HepG2 (cell line): ENCODE measurements at regions of chr2 and their contacts with region 1.

Region 1: GRCh38 chr2:11129598-11130449 is 25.4 kb upstream of the SLC66A3 start:
- DNase-seq: peak; percentile 62
- ATAC-seq: peak; percentile 68
- H3K4me3 ChIP-seq: peak overlapping the region; percentile 46 to 64 (median 47)
- H3K27ac ChIP-seq: no peak overlapping the region
- H3K4me1 ChIP-seq: peaks cover 58% of the 10 kb centered on the region
- H3K27me3 ChIP-seq: peaks cover 3 to 32% of the 10 kb centered on the region in 2 experiments; a peak in 4 of 5 replicates
- CTCF ChIP-seq: peak; percentile 93
- EP300 ChIP-seq: no peak
- POLR2A ChIP-seq: no peak
- RAD21 ChIP-seq: peak; percentile 76

Region 2: DNA sequence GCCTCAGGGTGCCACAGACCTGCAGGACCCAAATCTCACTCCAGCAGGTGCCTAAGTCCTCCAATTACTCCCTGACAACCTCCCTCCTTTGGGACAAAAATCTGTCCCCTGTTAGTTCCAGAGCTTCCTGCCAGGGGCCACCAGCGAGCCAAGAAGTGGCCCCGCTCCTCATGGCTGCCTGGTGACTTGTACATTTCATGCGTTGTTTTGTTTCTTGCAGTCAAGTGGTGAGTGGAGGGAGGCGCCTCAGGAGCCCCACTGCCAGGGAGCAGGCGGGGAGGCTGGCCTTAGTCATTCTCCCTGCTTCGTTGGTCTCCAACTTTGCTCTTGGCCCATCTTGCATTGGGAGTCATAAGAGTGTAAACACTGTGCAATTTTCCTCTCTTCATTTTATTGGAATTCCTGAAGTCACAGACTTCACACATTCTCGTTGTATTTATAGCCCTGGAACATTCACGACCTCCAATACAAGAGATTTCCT is 136.8 kb before region 1 on chr2:
- CTCF ChIA-PET with region 1: no interaction called
- POLR2A ChIA-PET with region 1: no interaction called
- in situ Hi-C with region 1: no loop called
- intact Hi-C with region 1: no loop called
- DNase-seq: no peak
- ATAC-seq: no peak
- H3K4me3 ChIP-seq: no peak overlapping the region
- H3K27ac ChIP-seq: no peak overlapping the region
- H3K4me1 ChIP-seq: no peaks in the 10 kb centered on the region
- H3K27me3 ChIP-seq: peaks cover 11 to 52% of the 10 kb centered on the region in 2 experiments; a peak in 4 of 5 replicates
- CTCF ChIP-seq: no peak
- EP300 ChIP-seq: no peak
- POLR2A ChIP-seq: no peak
- RAD21 ChIP-seq: no peak

Region 3: GRCh38 chr2:11154923-11155380 is 25.1 kb after region 1 on chr2:
- CTCF ChIA-PET with region 1: interaction called, 3 read pairs
- POLR2A ChIA-PET with region 1: interaction called, 18 read pairs
- in situ Hi-C with region 1: no loop called
- intact Hi-C with region 1: loop called (anchors 2 kb)
- DNase-seq: peak; percentile 92
- ATAC-seq: peak; percentile 64
- H3K4me3 ChIP-seq: peak overlapping the region; percentile 54 to 86 (median 56)
- H3K27ac ChIP-seq: no peak overlapping the region
- H3K4me1 ChIP-seq: peaks cover 50% of the 10 kb centered on the region
- H3K27me3 ChIP-seq: peaks cover 6 to 58% of the 10 kb centered on the region in 2 experiments; a peak in 4 of 5 replicates
- CTCF ChIP-seq: no peak
- EP300 ChIP-seq: 0 out of 4 replicates have a peak, but pooled peaks of 1 of the 2 experiments have one; percentile 8
- POLR2A ChIP-seq: peak in 1 of 2 experiments; percentile 44; a peak in 2 of 4 replicates
- RAD21 ChIP-seq: no peak

Region 4: DNA sequence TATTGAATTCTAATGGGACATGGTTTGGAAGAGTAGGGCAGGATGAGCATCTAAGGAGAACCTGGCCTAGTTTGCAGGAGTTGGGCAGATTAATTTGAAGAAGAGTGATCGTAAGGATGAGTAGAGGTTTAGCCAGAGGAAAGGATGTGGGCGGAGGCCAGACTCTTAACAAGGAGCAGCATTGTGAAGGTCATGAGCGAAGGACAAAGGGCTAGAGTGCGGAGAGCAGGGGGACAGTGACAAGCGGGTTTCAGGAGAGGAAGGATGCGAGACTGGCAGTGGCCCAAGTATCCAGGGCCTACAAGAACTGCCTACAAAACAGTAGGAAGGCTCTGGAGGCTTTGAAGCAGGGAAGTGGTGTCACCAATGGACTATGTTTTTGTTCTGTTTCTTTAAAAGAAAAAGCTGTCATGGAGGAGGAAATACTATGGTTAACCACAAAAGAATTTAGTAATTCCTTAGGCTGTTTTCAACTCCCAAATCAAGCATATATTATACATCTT is 45.5 kb after region 1 on chr2:
- CTCF ChIA-PET with region 1: no interaction called
- POLR2A ChIA-PET with region 1: no interaction called
- in situ Hi-C with region 1: no loop called
- intact Hi-C with region 1: loop called (anchors 5 kb)
- DNase-seq: no peak
- ATAC-seq: peak; percentile 15
- H3K4me3 ChIP-seq: no peak overlapping the region
- H3K27ac ChIP-seq: no peak overlapping the region
- H3K4me1 ChIP-seq: 0 out of 2 replicates have a peak, but pooled peaks cover 13% of the 10 kb centered on the region
- H3K27me3 ChIP-seq: no peaks in the 10 kb centered on the region
- CTCF ChIP-seq: no peak
- EP300 ChIP-seq: no peak
- POLR2A ChIP-seq: peak in 1 of 2 experiments; percentile 38; a peak in 1 of 4 replicates
- RAD21 ChIP-seq: no peak

Region 5: DNA sequence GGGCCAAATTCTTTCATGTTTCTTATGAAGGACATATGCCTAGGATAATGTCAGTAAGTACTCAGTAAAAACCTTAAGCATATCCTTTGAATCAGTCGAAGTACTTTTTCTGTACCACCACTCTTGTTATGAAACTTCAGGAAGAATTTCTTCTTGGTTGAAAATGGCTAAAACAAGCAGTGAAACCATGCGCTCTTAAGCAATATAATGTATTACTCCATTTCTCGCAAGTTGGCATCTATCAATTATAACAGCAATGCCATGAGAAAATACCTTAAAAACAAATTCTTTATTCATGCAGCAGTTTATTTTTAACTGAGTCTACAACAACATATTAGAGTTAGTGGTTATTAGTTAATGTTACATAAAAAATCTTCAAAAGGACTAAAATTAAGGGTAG is 66.4 kb after region 1 on chr2:
- CTCF ChIA-PET with region 1: no interaction called
- POLR2A ChIA-PET with region 1: no interaction called
- in situ Hi-C with region 1: no loop called
- intact Hi-C with region 1: loop called (anchors 5 kb)
- DNase-seq: no peak
- ATAC-seq: no peak
- H3K4me3 ChIP-seq: no peak overlapping the region
- H3K27ac ChIP-seq: no peak overlapping the region
- H3K4me1 ChIP-seq: no peaks in the 10 kb centered on the region
- H3K27me3 ChIP-seq: no peaks in the 10 kb centered on the region
- CTCF ChIP-seq: no peak
- EP300 ChIP-seq: no peak
- POLR2A ChIP-seq: no peak
- RAD21 ChIP-seq: no peak

Region 6: GRCh38 chr2:11411768-11412448 is 282.1 kb after region 1 on chr2:
- CTCF ChIA-PET with region 1: interaction called, 3 read pairs
- POLR2A ChIA-PET with region 1: interaction called, 6 read pairs
- in situ Hi-C with region 1: no loop called
- intact Hi-C with region 1: loop called (anchors 2 kb)
- DNase-seq: peak; percentile 65
- ATAC-seq: peak; percentile 78
- H3K4me3 ChIP-seq: no peak overlapping the region; a peak in 1 of 6 replicates
- H3K27ac ChIP-seq: no peak overlapping the region
- H3K4me1 ChIP-seq: peaks cover 33% of the 10 kb centered on the region
- H3K27me3 ChIP-seq: no peaks in the 10 kb centered on the region
- CTCF ChIP-seq: peak; percentile 92
- EP300 ChIP-seq: no peak
- POLR2A ChIP-seq: no peak
- RAD21 ChIP-seq: peak; percentile 93

Region 7: DNA sequence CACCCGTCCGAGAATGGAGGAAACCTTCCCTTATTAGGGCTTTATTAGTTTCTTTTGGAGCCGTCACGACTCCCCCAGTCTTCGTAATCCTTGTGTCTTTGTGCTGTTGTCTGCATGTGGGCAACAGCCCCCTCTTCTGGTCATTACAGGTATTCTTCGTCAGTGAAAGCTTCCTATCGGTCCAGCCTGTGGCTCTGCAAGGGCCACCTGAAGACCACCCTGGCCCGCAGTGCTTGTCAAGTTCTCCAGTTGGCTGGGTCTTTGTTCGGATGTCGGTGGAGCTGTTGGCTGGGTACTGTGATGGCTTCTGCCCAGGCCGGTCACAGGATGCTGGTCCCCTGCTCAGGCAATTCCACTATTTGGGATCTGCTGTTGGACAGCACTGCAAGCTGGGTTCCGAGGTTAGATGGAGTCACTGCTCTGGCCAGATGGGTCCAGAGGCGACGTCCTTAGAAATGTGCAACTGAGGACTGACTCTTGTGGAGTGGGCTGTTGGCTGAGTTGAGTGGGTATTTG is 317.0 kb after region 1 on chr2:
- CTCF ChIA-PET with region 1: interaction called, 11 read pairs
- POLR2A ChIA-PET with region 1: interaction called, 3 read pairs
- in situ Hi-C with region 1: loop called (anchors 5 kb)
- intact Hi-C with region 1: loop called (anchors 1 kb)
- DNase-seq: peak; percentile 75
- ATAC-seq: peak; percentile 86
- H3K4me3 ChIP-seq: no peak overlapping the region
- H3K27ac ChIP-seq: no peak overlapping the region
- H3K4me1 ChIP-seq: no peaks in the 10 kb centered on the region
- H3K27me3 ChIP-seq: no peaks in the 10 kb centered on the region
- CTCF ChIP-seq: peak; percentile 94
- EP300 ChIP-seq: no peak
- POLR2A ChIP-seq: no peak
- RAD21 ChIP-seq: peak; percentile 90